MCF 10A (cell line): ENCODE measurements at regions of chr2 and their contacts with region 1.

Region 1: DNA sequence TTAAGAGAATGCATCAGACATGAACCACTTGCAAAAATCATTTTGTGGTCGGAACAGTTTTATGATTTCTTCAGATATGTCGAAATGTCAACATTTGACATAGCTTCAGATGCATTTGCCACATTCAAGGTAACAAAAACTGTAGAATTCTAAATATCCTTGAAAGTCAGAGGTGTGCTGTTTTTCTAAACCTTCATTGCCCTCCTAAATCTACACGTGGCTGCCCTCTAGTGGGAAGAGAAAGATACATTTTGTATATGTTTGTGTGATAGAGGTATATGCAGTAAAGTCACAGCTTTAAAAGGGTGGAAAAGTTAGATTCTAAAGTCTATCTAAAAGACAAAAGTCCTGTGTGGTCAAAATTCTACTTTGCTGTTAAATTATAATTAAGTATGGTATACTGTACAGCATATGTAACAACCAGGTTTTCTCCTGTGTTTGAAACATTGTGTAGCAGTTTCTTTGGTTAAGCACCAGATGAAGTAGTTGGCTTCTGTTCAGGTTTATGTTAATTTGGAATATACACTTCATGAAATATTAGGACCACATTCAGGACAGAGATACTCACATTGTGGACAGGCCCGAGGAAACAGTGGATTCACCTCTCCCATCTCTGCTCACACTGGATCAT is 65.9 kb upstream of the ITM2C start:
- DNase-seq: peak; percentile 85
- H3K4me3 Mint-ChIP-seq: no peak overlapping the region
- H3K27ac Mint-ChIP-seq: no peak overlapping the region
- H3K4me1 Mint-ChIP-seq: peaks cover 9% of the 10 kb centered on the region
- H3K27me3 Mint-ChIP-seq: no peaks in the 10 kb centered on the region
- CTCF ChIP-seq: peak; percentile 75

Region 2: GRCh38 chr2:230007931-230008707 is 790.8 kb before region 1 on chr2:
- CTCF ChIA-PET with region 1: interaction called, 3 read pairs
- POLR2A ChIA-PET with region 1: no interaction called
- intact Hi-C with region 1: loop called (anchors 2 kb)
- DNase-seq: peak; percentile 82
- H3K4me3 Mint-ChIP-seq: no peak overlapping the region
- H3K27ac Mint-ChIP-seq: no peak overlapping the region
- H3K4me1 Mint-ChIP-seq: peaks cover 5% of the 10 kb centered on the region
- H3K27me3 Mint-ChIP-seq: no peaks in the 10 kb centered on the region
- CTCF ChIP-seq: peak; percentile 84

Region 3: GRCh38 chr2:230703514-230703913 is 95.4 kb before region 1 on chr2:
- CTCF ChIA-PET with region 1: interaction called, 10 read pairs
- POLR2A ChIA-PET with region 1: no interaction called
- intact Hi-C with region 1: no loop called
- DNase-seq: no peak
- H3K4me3 Mint-ChIP-seq: no peak overlapping the region
- H3K27ac Mint-ChIP-seq: no peak overlapping the region
- H3K4me1 Mint-ChIP-seq: peaks cover 11% of the 10 kb centered on the region
- H3K27me3 Mint-ChIP-seq: no peaks in the 10 kb centered on the region
- CTCF ChIP-seq: no peak

Region 4: GRCh38 chr2:230762317-230762896 is 36.5 kb before region 1 on chr2:
- CTCF ChIA-PET with region 1: interaction called, 13 read pairs
- POLR2A ChIA-PET with region 1: interaction called, 7 read pairs
- intact Hi-C with region 1: no loop called
- DNase-seq: peak; percentile 65
- H3K4me3 Mint-ChIP-seq: no peak overlapping the region
- H3K27ac Mint-ChIP-seq: no peak overlapping the region
- H3K4me1 Mint-ChIP-seq: peaks cover 25% of the 10 kb centered on the region
- H3K27me3 Mint-ChIP-seq: no peaks in the 10 kb centered on the region
- CTCF ChIP-seq: peak; percentile 48

Region 5: GRCh38 chr2:230781130-230781797 is 17.6 kb before region 1 on chr2:
- CTCF ChIA-PET with region 1: interaction called, 11 read pairs
- POLR2A ChIA-PET with region 1: interaction called, 193 read pairs
- intact Hi-C with region 1: no loop called
- DNase-seq: peak; percentile 70
- H3K4me3 Mint-ChIP-seq: peak overlapping the region; percentile 20
- H3K27ac Mint-ChIP-seq: peak overlapping the region; percentile 82
- H3K4me1 Mint-ChIP-seq: peaks cover 57% of the 10 kb centered on the region
- H3K27me3 Mint-ChIP-seq: no peaks in the 10 kb centered on the region
- CTCF ChIP-seq: no peak

Region 6: DNA sequence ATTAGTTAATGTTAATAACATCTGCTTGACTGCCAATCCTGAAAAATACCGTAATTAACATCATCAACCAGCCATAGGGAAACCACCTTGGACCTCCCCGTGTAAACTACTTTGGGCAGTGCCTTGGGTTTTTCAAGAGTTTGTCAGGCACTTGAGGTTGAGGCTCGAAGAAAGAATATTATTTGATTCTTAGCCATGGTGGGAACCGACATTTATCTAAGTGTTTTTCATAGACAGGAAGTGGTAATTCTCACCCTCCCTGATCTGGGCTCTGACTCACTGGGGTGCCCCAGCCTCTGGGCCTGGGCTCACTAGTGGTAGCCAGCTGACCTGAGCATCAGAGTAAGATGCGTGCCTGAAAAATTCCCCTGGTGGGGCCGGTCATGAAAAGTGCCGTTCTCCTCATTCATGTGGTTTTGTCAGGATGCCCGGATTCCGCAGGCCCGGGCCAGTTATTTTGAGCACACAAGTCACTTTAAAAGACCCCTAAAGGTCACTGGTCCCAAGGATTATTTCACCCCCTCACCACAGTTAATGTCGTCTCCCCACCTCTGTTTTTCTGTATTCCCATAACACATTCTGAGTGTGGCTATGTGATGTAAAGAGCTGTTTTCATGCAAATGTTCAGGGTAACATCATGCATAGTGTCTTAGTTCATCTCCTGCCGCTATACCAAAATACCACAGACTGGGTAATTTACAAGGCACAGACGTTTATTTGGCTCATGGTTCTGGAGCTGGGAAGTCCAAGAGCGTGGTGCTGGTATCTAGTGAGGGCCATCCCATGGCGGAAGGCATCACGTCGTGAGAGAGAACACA is 175.4 kb after region 1 on chr2:
- CTCF ChIA-PET with region 1: no interaction called
- POLR2A ChIA-PET with region 1: no interaction called
- intact Hi-C with region 1: no loop called
- DNase-seq: peak; percentile 14
- H3K4me3 Mint-ChIP-seq: no peak overlapping the region
- H3K27ac Mint-ChIP-seq: no peak overlapping the region
- H3K4me1 Mint-ChIP-seq: no peaks in the 10 kb centered on the region
- H3K27me3 Mint-ChIP-seq: peaks cover 27% of the 10 kb centered on the region
- CTCF ChIP-seq: no peak